Esophagus muscularis mucosa (tissue), 4 donors: ENCODE measurements at regions of chr22 and their contacts with region 1.

Region 1: DNA sequence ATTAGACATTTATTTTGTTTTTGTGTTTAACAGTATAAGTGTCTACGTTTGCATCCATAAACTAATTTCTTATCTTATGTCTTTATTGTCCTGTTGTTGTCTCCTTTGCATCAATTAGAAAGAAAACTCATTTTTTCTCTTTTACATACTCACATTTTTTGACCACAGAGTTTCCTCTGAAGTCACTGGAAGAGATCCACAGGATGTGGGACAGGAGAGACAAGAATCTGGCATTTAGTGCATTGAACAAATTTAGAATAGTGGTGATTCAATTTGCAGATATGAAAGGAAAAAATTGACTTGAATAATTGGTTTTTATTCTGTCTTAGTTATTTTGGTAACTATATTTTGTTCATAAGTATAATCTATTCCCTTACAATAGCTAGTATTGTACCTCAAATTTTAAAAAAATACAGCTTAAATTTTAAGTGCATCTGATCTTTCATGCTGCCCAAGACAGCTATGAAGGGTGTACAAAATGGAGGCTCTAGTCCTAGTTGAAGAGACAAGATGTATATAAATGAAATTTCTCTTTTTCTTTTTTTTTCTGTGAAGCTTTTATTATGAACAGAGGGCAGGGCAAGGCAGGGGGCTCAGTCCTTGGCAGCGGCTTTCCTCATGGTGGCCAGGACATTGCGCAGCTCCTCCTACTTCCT is 24.4 kb downstream of the HORMAD2 start:
- DNase-seq: no peak
- H3K4me3 ChIP-seq: no peak overlapping the region
- H3K27ac ChIP-seq: no peak overlapping the region
- H3K4me1 ChIP-seq: no peaks in the 10 kb centered on the region
- H3K27me3 ChIP-seq: peaks cover 0 to 5% (median 0%) of the 10 kb centered on the region in 4 donors
- CTCF ChIP-seq: no peak
- EP300 ChIP-seq: no peak
- POLR2A ChIP-seq: no peak

Region 2: GRCh38 chr22:30253205-30253852 is 148.7 kb after region 1 on chr22:
- intact Hi-C with region 1: loop called (anchors 1 kb)
- DNase-seq: no peak
- H3K4me3 ChIP-seq: peak overlapping the region in 1 of 4 donors; percentile 4
- H3K27ac ChIP-seq: peak overlapping the region in 2 of 4 donors; percentile 15 to 55
- H3K4me1 ChIP-seq: peaks cover 24 to 44% (median 41%) of the 10 kb centered on the region in 4 donors
- H3K27me3 ChIP-seq: peaks cover 0 to 31% (median 0%) of the 10 kb centered on the region in 4 donors
- CTCF ChIP-seq: no peak
- EP300 ChIP-seq: no peak
- POLR2A ChIP-seq: no peak